ENCODE measurements at regions of chr9 and their contacts with region 1.

Region 1: DNA sequence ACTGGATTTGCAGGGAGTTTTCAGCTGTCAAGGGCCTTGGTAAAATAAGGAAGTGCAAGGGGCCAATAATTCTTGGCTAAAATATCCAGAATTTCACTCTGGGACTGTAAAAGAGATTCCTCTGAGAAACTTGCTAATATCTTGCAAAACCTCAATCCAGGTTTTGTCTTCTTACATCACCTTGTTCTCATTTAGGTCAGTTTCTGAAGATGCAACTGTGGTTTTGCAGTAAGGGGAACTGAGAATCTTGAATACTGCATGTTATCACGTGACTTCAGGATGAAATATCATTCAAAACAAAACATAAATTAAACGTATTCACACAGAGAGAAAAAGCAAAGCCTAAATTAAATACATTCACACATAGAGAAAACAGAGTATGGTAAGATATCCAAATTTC is 35.0 kb upstream of the RIC1 start:
- DNase-seq: no peak
- ATAC-seq: no peak
- H3K4me3 ChIP-seq: no peak overlapping the region
- H3K27ac ChIP-seq: no peak overlapping the region
- H3K4me1 ChIP-seq: no peaks in the 10 kb centered on the region
- H3K27me3 ChIP-seq: no peaks in the 10 kb centered on the region
- CTCF ChIP-seq: no peak
- EP300 ChIP-seq: no peak
- POLR2A ChIP-seq: no peak
- RAD21 ChIP-seq: no peak

Region 2: DNA sequence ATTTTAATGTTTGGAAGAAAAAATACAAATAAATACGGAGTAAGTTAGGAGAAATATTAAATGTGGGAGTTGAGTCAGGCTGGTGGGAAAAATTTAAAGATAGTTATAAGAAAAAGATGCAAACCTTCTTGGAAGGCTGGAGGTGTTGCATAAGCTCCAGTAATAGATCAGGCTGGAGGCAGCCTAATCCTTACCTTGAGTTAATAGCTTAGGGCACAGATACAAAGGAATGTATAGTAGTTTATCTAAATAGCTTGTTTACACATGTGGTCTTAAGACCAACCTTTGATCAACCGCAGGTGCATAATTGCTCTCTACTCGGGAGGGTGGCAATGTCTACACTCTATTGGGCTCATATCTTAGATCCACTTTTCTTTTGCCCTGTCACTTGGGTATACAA is 365.4 kb before region 1 on chr9:
- CTCF ChIA-PET with region 1: no interaction called
- POLR2A ChIA-PET with region 1: no interaction called
- in situ Hi-C with region 1: no loop called
- intact Hi-C with region 1: loop called (anchors 5 kb)
- DNase-seq: no peak
- ATAC-seq: no peak
- H3K4me3 ChIP-seq: no peak overlapping the region
- H3K27ac ChIP-seq: no peak overlapping the region
- H3K4me1 ChIP-seq: no peaks in the 10 kb centered on the region
- H3K27me3 ChIP-seq: no peaks in the 10 kb centered on the region
- CTCF ChIP-seq: no peak
- EP300 ChIP-seq: no peak
- POLR2A ChIP-seq: no peak
- RAD21 ChIP-seq: no peak

Region 3: GRCh38 chr9:5437254-5438216 is 156.4 kb before region 1 on chr9 and contains the start of gene PLGRKT:
- CTCF ChIA-PET with region 1: no interaction called
- POLR2A ChIA-PET with region 1: no interaction called
- in situ Hi-C with region 1: loop called (anchors 10 kb)
- intact Hi-C with region 1: no loop called
- DNase-seq: peak; percentile 93
- ATAC-seq: peak; percentile 99
- H3K4me3 ChIP-seq: peak within 1 kb of the TSS; percentile 72 to 81 (median 78)
- H3K27ac ChIP-seq: peak within 1 kb of the TSS; percentile 86
- H3K4me1 ChIP-seq: peaks cover 29% of the 10 kb centered on the region
- H3K27me3 ChIP-seq: no peaks in the 10 kb centered on the region; a peak in 1 of 5 replicates
- CTCF ChIP-seq: peak; percentile 68
- EP300 ChIP-seq: 0 out of 4 replicates have a peak, but pooled peaks of 1 of the 2 experiments have one; percentile 14
- POLR2A ChIP-seq: peak; percentile 87 to 88
- RAD21 ChIP-seq: 0 out of 2 replicates have a peak, but pooled peaks have one; percentile 39
- total RNA-seq, gene PLGRKT: 15.8 and 20.2 TPM in 2 replicates

Region 4: DNA sequence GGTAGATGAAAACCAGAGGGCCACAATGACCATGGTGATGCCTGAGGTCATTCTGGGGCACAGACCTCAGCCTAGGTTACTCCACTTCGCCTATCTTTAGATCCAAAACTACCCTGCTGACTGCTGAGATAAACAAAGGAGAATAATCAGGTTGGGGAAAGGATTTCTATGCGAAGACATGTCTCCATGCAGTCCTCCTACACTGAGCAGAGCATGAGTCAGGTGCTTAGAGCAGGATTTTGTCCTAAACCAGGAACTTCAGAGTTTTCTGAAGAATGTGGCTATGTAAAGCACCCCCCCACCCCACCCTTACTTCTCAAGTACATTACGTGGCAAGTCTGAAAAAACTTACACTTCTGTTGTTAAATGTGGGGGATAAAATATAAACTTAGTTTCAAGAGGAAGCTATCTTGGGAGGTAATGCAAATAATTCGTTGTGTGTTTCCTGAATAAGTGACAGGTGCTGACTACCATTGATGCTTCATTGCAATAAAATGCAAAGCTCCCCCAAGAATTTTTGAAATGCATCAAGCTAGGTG is 64.2 kb before region 1 on chr9:
- CTCF ChIA-PET with region 1: no interaction called
- POLR2A ChIA-PET with region 1: no interaction called
- in situ Hi-C with region 1: no loop called
- intact Hi-C with region 1: no loop called
- DNase-seq: no peak
- ATAC-seq: no peak
- H3K4me3 ChIP-seq: no peak overlapping the region
- H3K27ac ChIP-seq: no peak overlapping the region
- H3K4me1 ChIP-seq: no peaks in the 10 kb centered on the region; the same call in 1 of the 2 replicates
- H3K27me3 ChIP-seq: 0 out of 5 replicates have a peak, but pooled peaks cover 0 to 3% of the 10 kb centered on the region in 2 experiments
- CTCF ChIP-seq: no peak
- EP300 ChIP-seq: no peak
- POLR2A ChIP-seq: no peak
- RAD21 ChIP-seq: no peak

Region 5: DNA sequence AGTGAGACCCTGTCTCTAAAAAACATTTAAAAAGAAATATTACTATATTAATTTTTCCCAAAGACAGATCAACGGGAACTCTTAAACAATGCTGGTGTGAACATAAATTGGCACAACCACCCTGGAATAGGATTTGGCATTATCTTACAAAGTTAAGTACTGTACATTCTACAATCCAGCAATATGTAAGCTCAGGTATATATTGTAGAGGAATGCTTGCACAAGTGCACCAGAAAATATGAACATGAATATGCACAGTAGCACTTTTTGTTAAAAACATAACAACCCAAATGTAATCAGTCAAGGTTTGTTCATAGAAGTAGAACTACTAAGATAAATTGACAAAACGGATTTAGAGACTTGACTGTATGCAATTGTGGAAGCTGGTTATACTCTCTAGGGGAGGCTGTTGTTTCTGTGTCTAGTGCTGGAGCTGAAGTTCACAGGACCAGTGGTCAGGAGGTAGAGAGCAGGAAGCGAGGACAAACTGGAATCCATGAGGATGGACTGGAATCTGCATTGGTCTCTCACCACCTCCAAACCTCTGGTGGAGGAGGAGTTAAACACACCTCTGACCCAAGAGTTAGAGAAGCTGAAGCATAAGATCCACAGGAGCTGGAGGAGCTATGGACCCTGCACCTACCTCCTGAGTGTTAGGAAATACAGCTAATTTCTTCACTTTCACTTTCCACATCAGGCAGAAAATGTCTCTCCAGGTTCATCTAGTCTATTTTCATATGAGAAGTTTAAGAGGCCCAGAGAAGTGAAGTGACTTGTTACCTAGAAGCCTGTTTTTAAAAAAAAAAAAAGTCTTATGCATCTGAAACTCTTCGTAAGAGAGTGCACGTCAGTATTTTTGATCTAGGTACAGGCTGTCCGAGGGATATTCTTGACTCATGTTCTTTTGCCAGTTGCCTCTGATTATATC is 14.7 kb after region 1 on chr9:
- CTCF ChIA-PET with region 1: no interaction called
- POLR2A ChIA-PET with region 1: no interaction called
- in situ Hi-C with region 1: no loop called
- intact Hi-C with region 1: no loop called
- DNase-seq: peak; percentile 49
- ATAC-seq: peak; percentile 99
- H3K4me3 ChIP-seq: peak overlapping the region; percentile 52 to 76 (median 66)
- H3K27ac ChIP-seq: peak overlapping the region; percentile 5
- H3K4me1 ChIP-seq: peaks cover 5% of the 10 kb centered on the region
- H3K27me3 ChIP-seq: no peaks in the 10 kb centered on the region
- CTCF ChIP-seq: peak; percentile 58
- EP300 ChIP-seq: no peak
- POLR2A ChIP-seq: no peak
- RAD21 ChIP-seq: no peak

Region 6: GRCh38 chr9:5832543-5833529 is 238.9 kb after region 1 on chr9 and contains the start of gene ERMP1:
- CTCF ChIA-PET with region 1: no interaction called
- POLR2A ChIA-PET with region 1: no interaction called
- in situ Hi-C with region 1: no loop called
- intact Hi-C with region 1: no loop called
- DNase-seq: peak; percentile 71
- ATAC-seq: peak; percentile 85
- H3K4me3 ChIP-seq: peak within 1 kb of the TSS; percentile 70 to 87 (median 73)
- H3K27ac ChIP-seq: peak within 1 kb of the TSS; percentile 90
- H3K4me1 ChIP-seq: peaks cover 66% of the 10 kb centered on the region
- H3K27me3 ChIP-seq: no peaks in the 10 kb centered on the region
- CTCF ChIP-seq: peak; percentile 94
- EP300 ChIP-seq: no peak
- POLR2A ChIP-seq: peak; percentile 74 to 77
- RAD21 ChIP-seq: peak; percentile 79
- total RNA-seq, gene ERMP1: 28.1 and 40.9 TPM in 2 replicates